Dorsolateral prefrontal cortex (tissue), 120 donors: ENCODE measurements at regions of chr12 and their contacts with region 1.

Region 1: GRCh38 chr12:52372216-52373154 is 5.2 kb upstream of the KRT85 start:
- DNase-seq: peak; percentile 34 to 89 (median 85)
- H3K4me3 ChIP-seq: no peak overlapping the region
- H3K27ac ChIP-seq: peak overlapping the region in 17 of 59 donors; percentile 2 to 72 (median 36)
- H3K27me3 ChIP-seq: peaks cover 0 to 2% (median 0%) of the 10 kb centered on the region in 45 donors
- CTCF ChIP-seq: peak; percentile 57 to 95 (median 85)

Region 2: GRCh38 chr12:52506858-52507715 is 134.6 kb after region 1 on chr12:
- intact Hi-C with region 1: loop called in 1 of 2 experiments (anchors 5 kb)
- DNase-seq: no peak
- H3K4me3 ChIP-seq: no peak overlapping the region
- H3K27ac ChIP-seq: no peak overlapping the region
- H3K27me3 ChIP-seq: peaks cover 0 to 3% (median 0%) of the 10 kb centered on the region in 45 donors
- CTCF ChIP-seq: peak in 55 of 56 donors; percentile 27 to 72 (median 58)

Region 3: DNA sequence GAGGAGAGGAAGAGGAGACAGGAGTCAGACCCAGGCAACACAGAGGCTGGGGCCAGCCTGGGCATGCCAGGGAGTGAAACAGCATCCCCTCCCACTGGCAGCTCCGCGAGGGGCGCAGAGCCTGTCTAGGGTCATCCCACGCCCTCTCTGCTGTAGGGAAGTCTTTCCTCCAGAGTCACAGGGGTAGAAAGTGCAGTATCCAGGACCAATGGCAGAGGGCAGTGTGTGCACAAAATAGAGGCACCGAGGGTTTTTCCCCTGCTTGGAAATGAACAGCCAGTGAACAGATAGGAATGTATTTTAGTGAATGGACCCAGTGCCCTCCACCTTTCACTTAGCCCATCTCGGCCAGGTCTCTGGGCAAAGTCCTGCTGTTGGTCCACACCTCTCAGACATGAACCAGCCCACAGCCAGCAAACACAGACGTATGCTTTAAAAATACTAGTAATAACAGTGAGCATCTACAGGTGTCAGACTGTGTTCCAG is 210.5 kb after region 1 on chr12:
- intact Hi-C with region 1: loop called in 1 of 2 experiments (anchors 5 kb)
- DNase-seq: peak in 5 of 10 donors; percentile 11 to 68 (median 56)
- H3K4me3 ChIP-seq: no peak overlapping the region
- H3K27ac ChIP-seq: no peak overlapping the region
- H3K27me3 ChIP-seq: no peaks in the 10 kb centered on the region
- CTCF ChIP-seq: peak; percentile 22 to 83 (median 70)

Region 4: GRCh38 chr12:52870351-52871290 is 498.1 kb after region 1 on chr12:
- intact Hi-C with region 1: loop called (anchors 5 kb)
- DNase-seq: peak in 8 of 10 donors; percentile 32 to 71 (median 50)
- H3K4me3 ChIP-seq: no peak overlapping the region
- H3K27ac ChIP-seq: peak overlapping the region in 8 of 59 donors; percentile 11 to 46 (median 27)
- H3K27me3 ChIP-seq: peaks cover 0 to 7% (median 0%) of the 10 kb centered on the region in 45 donors
- CTCF ChIP-seq: peak; percentile 14 to 84 (median 73)

Region 5: DNA sequence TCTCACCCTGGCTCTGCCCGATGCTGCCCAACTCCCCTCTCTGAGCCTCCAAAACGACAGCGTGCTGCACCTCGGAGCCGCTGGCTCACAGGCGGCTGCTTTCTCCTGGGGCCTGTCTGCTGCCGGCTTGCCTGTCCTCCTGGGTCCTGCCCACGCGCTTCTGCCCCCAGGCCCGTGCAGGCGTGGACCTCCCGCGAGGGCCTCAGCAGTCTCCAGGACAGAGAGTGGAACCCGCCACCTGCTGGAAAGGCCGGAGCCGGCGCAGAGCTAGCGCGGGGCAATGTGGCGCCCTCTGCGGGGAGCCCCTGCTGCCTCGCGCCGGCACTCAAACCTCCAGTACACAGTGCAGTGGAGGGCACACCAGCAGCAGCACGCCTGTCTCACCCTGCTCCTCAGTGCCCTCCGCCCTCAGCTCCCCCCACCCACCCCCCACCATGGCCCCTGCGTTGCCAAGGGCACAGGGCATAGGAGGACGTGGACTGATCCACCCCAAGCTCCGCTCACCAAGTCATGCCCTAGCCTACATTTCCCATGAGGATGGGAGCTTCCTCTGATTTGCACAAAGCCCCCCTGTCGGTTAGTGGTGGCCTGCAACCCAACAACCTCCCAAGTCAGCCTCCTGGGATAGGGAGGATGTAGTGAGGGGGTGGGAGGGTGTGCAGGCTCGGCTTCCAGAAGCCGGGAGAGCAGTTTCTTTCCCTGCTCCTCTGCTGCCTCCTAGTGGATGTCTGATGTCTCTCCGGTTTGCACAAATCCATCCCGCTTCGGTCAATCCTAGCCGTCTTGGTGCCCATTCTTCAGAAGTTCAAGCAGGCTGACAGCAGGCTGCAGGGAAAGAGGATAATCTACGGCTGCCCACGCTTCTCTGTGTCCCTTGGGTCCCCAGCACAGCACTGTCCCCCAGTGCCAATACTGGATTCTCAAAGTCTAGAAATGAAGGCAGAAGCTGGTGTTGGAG is 507.2 kb after region 1 on chr12:
- intact Hi-C with region 1: loop called (anchors 5 kb)
- DNase-seq: peak; percentile 55 to 82 (median 74)
- H3K4me3 ChIP-seq: peak overlapping the region in 52 of 59 donors; percentile 4 to 58 (median 38)
- H3K27ac ChIP-seq: peak overlapping the region in 13 of 59 donors; percentile 1 to 76 (median 41)
- H3K27me3 ChIP-seq: peaks cover 0 to 9% (median 0%) of the 10 kb centered on the region in 45 donors
- CTCF ChIP-seq: peak; percentile 24 to 90 (median 74)

Region 6: GRCh38 chr12:52988898-52989297 is 616.4 kb after region 1 on chr12:
- intact Hi-C with region 1: loop called in 1 of 2 experiments (anchors 5 kb)
- DNase-seq: no peak
- H3K4me3 ChIP-seq: no peak overlapping the region
- H3K27ac ChIP-seq: no peak overlapping the region
- H3K27me3 ChIP-seq: no peaks in the 10 kb centered on the region
- CTCF ChIP-seq: no peak